Heart left ventricle (tissue), 16 donors: ENCODE measurements at regions of chr22 and their contacts with region 1.

Region 1: GRCh38 chr22:31148953-31149627 is 8.8 kb upstream of the PLA2G3 start:
- DNase-seq: peak; percentile 74 to 79 (median 76)
- ATAC-seq: peak; percentile 91 to 97 (median 96)
- H3K4me3 ChIP-seq: no peak overlapping the region
- H3K27ac ChIP-seq: peak overlapping the region; percentile 37 to 85 (median 74)
- H3K4me1 ChIP-seq: peaks cover 0 to 14% (median 10%) of the 10 kb centered on the region in 12 donors
- H3K27me3 ChIP-seq: no peaks in the 10 kb centered on the region
- CTCF ChIP-seq: peak; percentile 81 to 98 (median 94)
- POLR2A ChIP-seq: no peak

Region 2: DNA sequence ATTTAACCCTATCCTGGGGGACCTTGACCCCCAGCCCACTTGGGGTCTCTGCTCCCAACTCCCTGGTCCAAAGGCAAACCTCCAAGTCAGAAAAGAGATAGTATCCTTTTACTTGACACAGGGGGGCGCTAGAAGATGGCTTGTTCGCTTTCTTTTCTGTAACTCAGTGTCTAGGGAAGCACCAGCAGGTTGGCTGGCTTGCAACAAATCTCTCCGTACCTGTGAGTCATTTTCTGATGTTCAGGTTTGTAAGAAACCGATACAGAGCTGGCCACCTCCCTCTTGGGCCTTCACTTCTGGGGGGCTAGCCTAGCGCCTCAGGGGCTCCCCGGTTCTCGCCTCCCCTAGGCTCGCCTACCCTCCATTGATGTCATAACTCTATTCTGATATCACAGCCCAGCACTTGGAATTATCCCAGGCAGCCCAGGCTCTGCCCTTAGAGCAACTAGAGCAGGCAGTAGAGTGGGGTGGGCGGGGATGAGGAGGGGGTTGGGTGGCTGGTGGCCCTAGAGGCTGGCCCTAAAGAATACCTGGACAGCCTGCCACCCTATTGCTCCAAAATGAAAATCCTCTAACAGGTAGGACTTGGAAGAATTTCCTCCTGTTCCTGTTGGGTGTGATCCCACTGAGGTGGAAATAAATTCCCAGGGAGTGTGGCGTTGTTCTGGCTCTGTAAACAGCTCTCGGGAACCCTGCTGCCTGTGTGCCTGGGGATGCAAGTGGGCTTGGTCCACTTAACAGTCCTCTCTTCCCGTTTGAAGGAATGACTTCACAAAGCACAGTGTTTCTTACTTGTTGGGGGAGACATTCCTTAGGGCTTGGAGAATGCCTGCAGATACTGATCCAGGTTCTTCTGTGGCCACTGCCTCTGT is 385.0 kb before region 1 on chr22:
- intact Hi-C with region 1: loop called in 7 of 10 experiments (anchors 2 to 10 kb)
- DNase-seq: peak in 3 of 5 donors; percentile 38 to 48 (median 44)
- ATAC-seq: peak; percentile 56 to 84 (median 76)
- H3K4me3 ChIP-seq: no peak overlapping the region
- H3K27ac ChIP-seq: no peak overlapping the region
- H3K4me1 ChIP-seq: peaks cover 0 to 5% (median 0%) of the 10 kb centered on the region in 12 donors
- H3K27me3 ChIP-seq: no peaks in the 10 kb centered on the region
- CTCF ChIP-seq: peak; percentile 40 to 73 (median 61)
- POLR2A ChIP-seq: no peak

Region 3: GRCh38 chr22:31089160-31090100 is 59.7 kb before region 1 on chr22:
- intact Hi-C with region 1: loop called in 9 of 10 experiments (anchors 1 to 10 kb)
- DNase-seq: peak in 3 of 5 donors; percentile 52 to 66 (median 58)
- ATAC-seq: peak in 2 of 4 donors; percentile 13 to 21
- H3K4me3 ChIP-seq: no peak overlapping the region
- H3K27ac ChIP-seq: peak overlapping the region in 9 of 12 donors; percentile 2 to 99 (median 43)
- H3K4me1 ChIP-seq: peaks cover 0 to 85% (median 21%) of the 10 kb centered on the region in 12 donors
- H3K27me3 ChIP-seq: no peaks in the 10 kb centered on the region
- CTCF ChIP-seq: peak; percentile 66 to 87 (median 76)
- POLR2A ChIP-seq: no peak

Region 4: GRCh38 chr22:31107178-31107893 is 41.8 kb before region 1 on chr22 and contains the start of gene SELENOM:
- intact Hi-C with region 1: loop called (anchors 1 to 5 kb)
- DNase-seq: peak; percentile 97 to 98 (median 97)
- ATAC-seq: peak; percentile 92 to 95 (median 94)
- H3K4me3 ChIP-seq: peak within 1 kb of the TSS; percentile 56 to 95 (median 74)
- H3K27ac ChIP-seq: peak within 1 kb of the TSS; percentile 88 to 99 (median 93)
- H3K4me1 ChIP-seq: peaks cover 0 to 45% (median 20%) of the 10 kb centered on the region in 12 donors
- H3K27me3 ChIP-seq: no peaks in the 10 kb centered on the region
- CTCF ChIP-seq: peak; percentile 88 to 99 (median 96)
- POLR2A ChIP-seq: peak in 1 of 2 donors; percentile 83
- total RNA-seq, gene SELENOM: 35.0 to 183 (median 52.9) TPM